Dendritic cell treated with granulocyte-macrophage colony-stimulating factor and Interleukin-4, amounts not matched to agents 40 ng/mL and 50 ng/mL, for 4 days (primary cell): ENCODE measurements at regions of chr16 and their contacts with region 1.

Region 1: GRCh38 chr16:85615852-85616606 is 2.9 kb downstream of the GSE1 start:
- H3K4me3 Mint-ChIP-seq: peak overlapping the region; percentile 76
- H3K27ac Mint-ChIP-seq: peak overlapping the region; percentile 85
- H3K4me1 Mint-ChIP-seq: peaks cover 47% of the 10 kb centered on the region
- H3K27me3 Mint-ChIP-seq: no peaks in the 10 kb centered on the region

Region 2: DNA sequence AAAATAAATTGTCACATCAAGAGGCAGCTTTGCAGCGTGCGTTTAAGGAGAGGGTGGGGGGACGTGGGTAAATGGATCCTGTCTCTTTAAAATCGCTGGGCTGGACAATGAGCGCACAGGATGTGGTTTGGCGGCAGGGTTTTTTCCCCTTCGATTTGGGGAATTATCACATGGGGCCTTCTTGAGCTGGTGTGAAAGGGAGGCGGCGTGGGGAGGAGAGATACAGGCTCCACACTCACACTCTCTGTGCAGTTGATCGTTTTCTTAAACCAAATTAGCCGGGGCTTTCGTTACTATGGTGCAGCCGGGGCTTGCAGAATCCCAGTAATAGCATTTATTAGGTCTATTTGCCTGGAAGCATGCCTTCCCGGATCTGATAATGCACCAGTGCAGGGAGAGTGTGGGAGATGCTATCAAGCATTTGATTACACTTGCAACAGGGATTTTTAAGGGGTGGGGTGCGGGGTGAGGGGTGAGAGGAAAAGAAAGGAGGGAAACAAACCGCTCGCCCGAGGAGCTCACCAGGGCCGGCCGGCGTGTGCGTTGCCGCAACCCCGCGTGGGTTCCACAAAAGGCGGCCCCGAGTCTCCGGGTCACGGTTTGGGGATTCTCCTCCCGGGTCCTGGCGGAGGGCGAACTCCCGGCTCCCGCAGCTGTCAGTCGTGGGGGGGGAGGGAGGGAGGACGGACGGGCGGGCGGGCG is 61.8 kb before region 1 on chr16:
- intact Hi-C with region 1: loop called (anchors 2 kb)
- H3K4me3 Mint-ChIP-seq: peak overlapping the region; percentile 95
- H3K27ac Mint-ChIP-seq: peak overlapping the region; percentile 95
- H3K4me1 Mint-ChIP-seq: peaks cover 53% of the 10 kb centered on the region
- H3K27me3 Mint-ChIP-seq: no peaks in the 10 kb centered on the region

Region 3: GRCh38 chr16:85569615-85570212 is 46.3 kb before region 1 on chr16:
- intact Hi-C with region 1: loop called (anchors 2 kb)
- H3K4me3 Mint-ChIP-seq: peak overlapping the region; percentile 39
- H3K27ac Mint-ChIP-seq: peak overlapping the region; percentile 97
- H3K4me1 Mint-ChIP-seq: peaks cover 97% of the 10 kb centered on the region
- H3K27me3 Mint-ChIP-seq: peaks cover 4% of the 10 kb centered on the region